Aorta (tissue), 5 donors: ENCODE measurements at regions of chr13 and their contacts with region 1.

Region 1: DNA sequence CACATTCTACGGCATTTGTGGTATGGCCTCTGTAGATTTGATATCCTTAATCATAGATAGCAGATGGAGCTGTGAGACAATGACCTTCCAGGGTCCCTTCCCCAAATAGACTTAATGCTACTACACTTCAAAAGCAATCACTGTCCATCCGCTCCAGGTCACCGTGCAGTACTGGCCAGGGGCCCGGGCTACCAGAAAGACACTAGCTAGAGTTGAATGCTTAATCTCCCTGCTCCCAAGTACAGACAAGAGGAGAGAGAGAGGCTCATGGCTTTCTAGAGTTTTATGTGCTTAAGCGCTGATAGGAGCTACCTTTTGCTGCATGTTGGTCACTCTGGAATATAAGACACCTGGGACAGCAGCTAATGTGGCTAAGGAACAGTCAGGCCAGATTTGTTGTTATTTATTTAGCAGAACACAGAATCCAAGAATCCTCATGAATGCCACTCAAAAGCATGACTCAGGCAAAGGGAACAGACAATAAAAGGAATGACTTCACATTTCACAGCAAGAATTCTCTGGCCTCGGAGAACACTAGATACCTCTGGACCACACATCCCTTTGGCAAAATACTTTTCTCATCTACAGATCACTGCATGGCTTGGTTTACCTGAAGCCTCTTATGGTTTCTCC is 165.0 kb downstream of the LACC1 start:
- DNase-seq: no peak
- ATAC-seq: no peak
- H3K4me3 ChIP-seq: no peak overlapping the region
- H3K27ac ChIP-seq: no peak overlapping the region
- H3K4me1 ChIP-seq: no peaks in the 10 kb centered on the region
- H3K27me3 ChIP-seq: no peaks in the 10 kb centered on the region

Region 2: DNA sequence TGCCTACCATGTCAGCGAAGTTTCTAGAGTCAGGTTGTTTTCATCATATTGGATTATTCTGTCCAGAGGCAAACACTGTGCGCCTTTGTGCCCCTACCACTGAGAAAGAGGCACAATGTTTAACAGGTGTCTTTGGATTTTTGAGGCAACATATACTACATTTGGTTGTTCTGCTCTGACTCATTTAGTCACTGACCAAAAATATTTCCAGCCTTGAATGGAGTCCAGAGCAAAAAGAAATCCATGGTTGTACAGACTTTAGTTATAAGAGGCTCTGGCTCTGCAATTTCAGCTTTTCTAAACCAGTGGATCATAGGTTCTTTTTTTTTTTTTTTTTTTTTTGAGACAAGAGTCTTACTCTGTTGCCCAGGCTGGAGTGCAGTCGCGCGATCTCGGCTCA is 129.2 kb before region 1 on chr13:
- intact Hi-C with region 1: loop called in 1 of 2 experiments (anchors 5 kb)
- DNase-seq: no peak
- ATAC-seq: no peak
- H3K4me3 ChIP-seq: no peak overlapping the region
- H3K27ac ChIP-seq: no peak overlapping the region
- H3K4me1 ChIP-seq: no peaks in the 10 kb centered on the region
- H3K27me3 ChIP-seq: no peaks in the 10 kb centered on the region